Ascending aorta (tissue), 2 donors: ENCODE measurements at regions of chr9 and their contacts with region 1.

Region 1: GRCh38 chr9:83362341-83362995 is 175.7 kb downstream of the FRMD3 start:
- DNase-seq: no peak
- H3K4me3 ChIP-seq: no peak overlapping the region
- H3K27ac ChIP-seq: no peak overlapping the region
- H3K4me1 ChIP-seq: peaks cover 0 to 3% of the 10 kb centered on the region in 2 donors
- H3K27me3 ChIP-seq: no peaks in the 10 kb centered on the region
- CTCF ChIP-seq: no peak

Region 2: DNA sequence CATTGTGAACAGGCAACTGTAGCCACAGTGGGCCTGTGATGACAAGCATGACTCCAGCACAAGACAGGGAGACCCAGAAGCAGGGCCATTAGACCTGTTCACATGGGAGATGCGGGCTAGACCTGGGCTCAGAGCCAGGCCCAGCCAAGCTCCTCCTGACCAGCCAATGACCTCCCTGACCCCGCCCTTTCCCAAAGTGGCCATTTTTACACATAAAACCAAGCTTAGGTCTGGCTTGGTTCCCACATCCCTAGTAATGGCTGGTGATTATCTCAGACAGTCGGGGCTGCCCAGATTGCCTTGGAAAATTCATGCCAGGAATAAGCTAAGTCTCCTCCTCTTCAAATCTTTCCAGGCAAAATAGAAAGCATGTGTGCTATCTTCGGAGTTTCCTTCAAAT is 81.6 kb after region 1 on chr9:
- intact Hi-C with region 1: loop called (anchors 10 kb)
- DNase-seq: peak in 1 of 2 donors; percentile 74
- H3K4me3 ChIP-seq: no peak overlapping the region
- H3K27ac ChIP-seq: peak overlapping the region; percentile 60 to 75
- H3K4me1 ChIP-seq: peaks cover 0 to 25% of the 10 kb centered on the region in 2 donors
- H3K27me3 ChIP-seq: no peaks in the 10 kb centered on the region
- CTCF ChIP-seq: no peak